ENCODE measurements at regions of chr10 and their contacts with region 1.

Region 1: DNA sequence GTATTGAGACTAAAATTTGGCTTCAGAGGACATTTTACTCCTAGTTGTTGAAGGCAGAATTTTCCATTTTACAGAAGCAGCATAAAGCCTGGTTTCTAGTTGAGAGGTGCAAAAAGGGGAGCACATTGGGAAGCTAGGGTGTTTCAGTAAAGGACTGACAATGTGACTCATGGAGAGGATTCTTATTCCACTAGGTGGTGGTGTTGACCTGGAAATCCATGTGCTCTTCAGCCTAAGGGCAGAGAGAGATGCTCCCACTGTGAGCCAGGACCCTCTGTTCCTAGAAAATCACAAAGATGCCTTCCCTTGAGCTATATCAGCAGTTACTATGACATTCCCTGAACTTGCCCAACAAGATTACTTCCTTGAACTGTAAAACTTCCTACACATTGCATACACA is 687.8 kb downstream of the IPMK start:
- DNase-seq: peak; percentile 61
- H3K4me3 Mint-ChIP-seq: no peak overlapping the region
- H3K27ac Mint-ChIP-seq: no peak overlapping the region
- H3K4me1 Mint-ChIP-seq: no peaks in the 10 kb centered on the region
- H3K27me3 Mint-ChIP-seq: no peaks in the 10 kb centered on the region
- CTCF ChIP-seq: peak; percentile 65

Region 2: GRCh38 chr10:57593983-57594573 is 14.2 kb after region 1 on chr10:
- CTCF ChIA-PET with region 1: interaction called, 24 read pairs
- POLR2A ChIA-PET with region 1: no interaction called
- intact Hi-C with region 1: no loop called
- DNase-seq: no peak
- H3K4me3 Mint-ChIP-seq: no peak overlapping the region
- H3K27ac Mint-ChIP-seq: peak overlapping the region; percentile 51
- H3K4me1 Mint-ChIP-seq: no peaks in the 10 kb centered on the region
- H3K27me3 Mint-ChIP-seq: peaks cover 34% of the 10 kb centered on the region
- CTCF ChIP-seq: peak; percentile 30

Region 3: DNA sequence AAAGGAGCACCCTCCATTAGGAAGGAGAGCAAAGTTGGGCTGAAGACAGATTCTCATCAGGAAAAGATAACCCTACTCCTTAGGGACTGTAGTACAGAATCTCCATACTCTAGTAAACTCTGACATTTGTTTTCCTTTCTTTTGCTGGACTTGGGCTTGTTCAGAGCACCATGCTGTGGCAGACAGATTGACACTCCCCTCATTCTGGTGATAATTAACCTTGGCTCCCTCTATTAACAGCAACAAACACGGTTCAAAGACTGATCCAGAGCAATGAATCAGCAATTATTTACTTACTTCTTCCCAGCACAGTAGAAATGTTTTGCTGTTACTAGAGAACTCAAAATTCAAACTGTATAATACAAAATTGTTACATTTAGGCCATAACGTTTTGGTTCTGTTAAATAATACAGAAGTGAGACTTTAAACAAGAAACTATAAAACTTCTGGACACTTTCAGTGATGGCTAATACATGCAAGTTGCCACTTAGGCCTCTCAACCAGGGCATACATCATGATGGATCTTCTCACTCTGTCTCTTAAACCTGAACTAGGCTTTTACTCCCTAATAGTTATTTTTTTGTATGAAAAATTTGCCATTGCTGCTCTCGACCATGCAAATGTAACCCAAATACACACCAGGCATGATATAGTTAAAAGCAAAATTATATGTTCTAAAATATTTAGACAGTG is 48.8 kb after region 1 on chr10:
- CTCF ChIA-PET with region 1: interaction called, 10 read pairs
- POLR2A ChIA-PET with region 1: no interaction called
- intact Hi-C with region 1: no loop called
- DNase-seq: no peak
- H3K4me3 Mint-ChIP-seq: no peak overlapping the region
- H3K27ac Mint-ChIP-seq: no peak overlapping the region
- H3K4me1 Mint-ChIP-seq: peaks cover 7% of the 10 kb centered on the region
- H3K27me3 Mint-ChIP-seq: no peaks in the 10 kb centered on the region
- CTCF ChIP-seq: no peak

Region 4: GRCh38 chr10:57716886-57717285 is 137.0 kb after region 1 on chr10:
- CTCF ChIA-PET with region 1: interaction called, 7 read pairs
- POLR2A ChIA-PET with region 1: no interaction called
- intact Hi-C with region 1: loop called (anchors 2 kb)
- DNase-seq: peak; percentile 53
- H3K4me3 Mint-ChIP-seq: no peak overlapping the region
- H3K27ac Mint-ChIP-seq: no peak overlapping the region
- H3K4me1 Mint-ChIP-seq: no peaks in the 10 kb centered on the region
- H3K27me3 Mint-ChIP-seq: no peaks in the 10 kb centered on the region
- CTCF ChIP-seq: peak; percentile 42

Region 5: GRCh38 chr10:57898237-57898636 is 318.3 kb after region 1 on chr10:
- CTCF ChIA-PET with region 1: no interaction called
- POLR2A ChIA-PET with region 1: no interaction called
- intact Hi-C with region 1: no loop called
- DNase-seq: no peak
- H3K4me3 Mint-ChIP-seq: no peak overlapping the region
- H3K27ac Mint-ChIP-seq: no peak overlapping the region
- H3K4me1 Mint-ChIP-seq: no peaks in the 10 kb centered on the region
- H3K27me3 Mint-ChIP-seq: no peaks in the 10 kb centered on the region
- CTCF ChIP-seq: no peak

Region 6: DNA sequence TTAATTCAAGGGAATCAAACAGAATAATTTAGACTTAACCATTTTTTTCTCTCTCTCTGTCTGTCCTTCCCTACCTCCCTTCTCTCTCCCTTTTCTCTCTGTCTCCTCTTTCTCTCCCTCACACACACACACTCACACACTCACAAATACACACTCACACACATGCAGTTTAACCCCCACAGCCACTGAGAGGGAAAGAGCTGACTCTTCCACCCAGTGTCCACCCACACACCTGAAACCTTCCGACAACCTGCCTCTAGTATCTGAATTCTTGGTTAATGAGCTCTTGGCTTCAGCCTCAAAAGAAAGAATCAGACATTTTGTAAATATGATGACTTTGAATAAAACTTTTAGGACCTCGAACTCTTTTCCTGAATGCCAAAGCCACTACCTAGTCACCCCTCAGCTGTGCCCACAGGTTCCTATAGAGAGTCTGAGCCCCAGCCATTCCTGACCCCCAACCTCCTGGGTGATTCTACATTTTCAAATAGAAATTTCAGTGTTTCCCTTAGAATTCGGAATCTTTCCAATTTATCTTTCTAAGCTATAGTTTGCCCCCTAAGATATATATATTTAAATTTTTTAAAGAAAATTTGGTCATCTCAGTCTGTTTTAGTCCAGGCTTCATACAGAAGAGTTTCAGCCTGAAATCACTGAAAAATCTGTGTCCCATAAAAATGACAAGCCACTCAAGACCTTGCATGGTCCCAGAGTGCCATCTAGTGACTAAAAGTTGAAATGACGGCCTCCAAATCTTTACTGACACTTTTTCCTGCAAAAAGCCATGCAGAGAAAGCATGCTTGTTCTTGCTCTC is 485.0 kb after region 1 on chr10:
- CTCF ChIA-PET with region 1: interaction called, 32 read pairs
- POLR2A ChIA-PET with region 1: interaction called, 4 read pairs
- intact Hi-C with region 1: loop called (anchors 1 kb)
- DNase-seq: peak; percentile 62
- H3K4me3 Mint-ChIP-seq: no peak overlapping the region
- H3K27ac Mint-ChIP-seq: peak overlapping the region; percentile 30
- H3K4me1 Mint-ChIP-seq: peaks cover 6% of the 10 kb centered on the region
- H3K27me3 Mint-ChIP-seq: no peaks in the 10 kb centered on the region
- CTCF ChIP-seq: peak; percentile 90

Measured in MCF 10A (cell line).